T-cell (primary cell): ENCODE measurements at regions of chr5 and their contacts with region 1.

Region 1: GRCh38 chr5:94740286-94740685 is 121.8 kb downstream of the SLF1 start:
- DNase-seq: no peak
- ATAC-seq: no peak
- H3K4me3 ChIP-seq: no peak overlapping the region
- H3K4me3 Mint-ChIP-seq: no peak overlapping the region
- H3K27ac ChIP-seq: no peak overlapping the region
- H3K27ac Mint-ChIP-seq: no peak overlapping the region
- H3K4me1 ChIP-seq: peaks cover 0 to 4% of the 10 kb centered on the region in 2 experiments
- H3K4me1 Mint-ChIP-seq: no peaks in the 10 kb centered on the region
- H3K27me3 ChIP-seq: peaks cover 0 to 11% of the 10 kb centered on the region in 2 experiments
- H3K27me3 Mint-ChIP-seq: peaks cover 0 to 5% of the 10 kb centered on the region in 2 donors

Region 2: GRCh38 chr5:94072116-94072515 is 668.2 kb before region 1 on chr5:
- CTCF ChIA-PET with region 1: no interaction called
- POLR2A ChIA-PET with region 1: no interaction called
- DNase-seq: no peak
- ATAC-seq: no peak
- H3K4me3 ChIP-seq: no peak overlapping the region
- H3K4me3 Mint-ChIP-seq: no peak overlapping the region
- H3K27ac ChIP-seq: no peak overlapping the region
- H3K27ac Mint-ChIP-seq: no peak overlapping the region
- H3K4me1 ChIP-seq: no peaks in the 10 kb centered on the region
- H3K4me1 Mint-ChIP-seq: peaks cover 45 to 52% (median 46%) of the 10 kb centered on the region in 3 donors
- H3K27me3 ChIP-seq: no peaks in the 10 kb centered on the region
- H3K27me3 Mint-ChIP-seq: no peaks in the 10 kb centered on the region

Region 3: DNA sequence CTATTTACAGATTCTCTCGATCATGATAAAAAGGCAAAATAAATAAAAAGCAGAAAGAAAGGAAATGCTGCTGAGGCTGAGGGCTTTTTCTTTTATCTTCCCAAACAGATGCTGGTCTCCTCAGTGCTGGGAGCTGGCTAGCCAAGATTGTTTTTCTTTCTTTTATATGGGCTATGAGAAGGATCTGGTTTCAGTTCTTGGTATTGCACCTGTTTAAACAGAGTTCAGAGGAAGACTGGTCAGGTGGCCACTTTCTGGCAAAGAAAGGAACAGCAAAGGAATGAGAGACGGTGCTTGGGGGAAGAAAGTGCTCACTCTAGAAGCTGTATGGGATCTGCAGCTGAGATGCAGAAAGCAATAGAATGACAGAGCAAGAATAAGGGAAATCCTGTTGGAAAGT is 32.9 kb before region 1 on chr5:
- CTCF ChIA-PET with region 1: no interaction called
- POLR2A ChIA-PET with region 1: no interaction called
- DNase-seq: no peak
- ATAC-seq: no peak
- H3K4me3 ChIP-seq: no peak overlapping the region
- H3K4me3 Mint-ChIP-seq: no peak overlapping the region
- H3K27ac ChIP-seq: no peak overlapping the region
- H3K27ac Mint-ChIP-seq: no peak overlapping the region
- H3K4me1 ChIP-seq: no peaks in the 10 kb centered on the region
- H3K4me1 Mint-ChIP-seq: peaks cover 0 to 5% (median 0%) of the 10 kb centered on the region in 3 donors
- H3K27me3 ChIP-seq: no peaks in the 10 kb centered on the region
- H3K27me3 Mint-ChIP-seq: no peaks in the 10 kb centered on the region

Region 4: GRCh38 chr5:94754824-94755223 is 14.5 kb after region 1 on chr5:
- CTCF ChIA-PET with region 1: interaction called in 1 of 2 experiments, 10 read pairs
- POLR2A ChIA-PET with region 1: interaction called in 1 of 2 experiments, 5 read pairs
- DNase-seq: no peak
- ATAC-seq: no peak
- H3K4me3 ChIP-seq: no peak overlapping the region
- H3K4me3 Mint-ChIP-seq: no peak overlapping the region
- H3K27ac ChIP-seq: no peak overlapping the region
- H3K27ac Mint-ChIP-seq: no peak overlapping the region
- H3K4me1 ChIP-seq: no peaks in the 10 kb centered on the region
- H3K4me1 Mint-ChIP-seq: no peaks in the 10 kb centered on the region
- H3K27me3 ChIP-seq: no peaks in the 10 kb centered on the region
- H3K27me3 Mint-ChIP-seq: peaks cover 0 to 4% of the 10 kb centered on the region in 2 donors

Region 5: DNA sequence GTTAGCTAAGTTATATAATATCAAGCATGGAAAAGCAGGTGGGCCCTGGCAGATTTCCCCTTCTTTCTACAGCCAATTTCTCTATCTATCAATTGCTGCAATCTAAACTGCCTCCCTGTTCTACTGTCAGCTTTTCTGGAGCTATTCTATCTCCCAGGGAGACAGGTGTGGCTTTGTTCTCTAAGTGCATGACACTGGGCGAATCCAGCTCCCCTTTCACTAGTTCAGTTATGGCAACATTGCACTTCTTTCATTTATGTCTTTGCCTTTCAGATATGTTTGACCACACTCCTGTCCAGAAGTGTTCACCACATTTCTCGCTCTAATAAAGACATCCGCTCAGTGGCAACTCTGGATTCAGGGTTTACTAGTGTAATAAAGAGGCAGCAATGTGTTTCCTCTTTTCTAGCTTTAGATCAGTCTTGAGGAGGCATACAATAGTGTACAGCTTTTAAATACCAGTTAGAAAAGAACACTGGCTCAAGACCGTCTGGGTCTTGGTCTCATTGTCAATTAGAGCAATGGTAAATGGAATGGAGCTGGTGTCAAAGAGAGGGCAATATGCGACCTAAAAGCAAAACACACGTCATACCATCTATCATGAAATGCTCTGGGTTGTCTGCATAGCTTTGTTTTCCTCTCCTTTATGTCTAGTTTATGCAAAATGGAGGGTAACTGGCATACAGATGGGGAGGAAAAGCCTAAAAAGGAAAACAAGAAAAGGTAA is 75.2 kb after region 1 on chr5:
- CTCF ChIA-PET with region 1: no interaction called
- POLR2A ChIA-PET with region 1: no interaction called
- DNase-seq: no peak
- ATAC-seq: no peak
- H3K4me3 ChIP-seq: no peak overlapping the region
- H3K4me3 Mint-ChIP-seq: no peak overlapping the region
- H3K27ac ChIP-seq: no peak overlapping the region
- H3K27ac Mint-ChIP-seq: no peak overlapping the region
- H3K4me1 ChIP-seq: no peaks in the 10 kb centered on the region
- H3K4me1 Mint-ChIP-seq: no peaks in the 10 kb centered on the region
- H3K27me3 ChIP-seq: no peaks in the 10 kb centered on the region
- H3K27me3 Mint-ChIP-seq: no peaks in the 10 kb centered on the region

Region 6: DNA sequence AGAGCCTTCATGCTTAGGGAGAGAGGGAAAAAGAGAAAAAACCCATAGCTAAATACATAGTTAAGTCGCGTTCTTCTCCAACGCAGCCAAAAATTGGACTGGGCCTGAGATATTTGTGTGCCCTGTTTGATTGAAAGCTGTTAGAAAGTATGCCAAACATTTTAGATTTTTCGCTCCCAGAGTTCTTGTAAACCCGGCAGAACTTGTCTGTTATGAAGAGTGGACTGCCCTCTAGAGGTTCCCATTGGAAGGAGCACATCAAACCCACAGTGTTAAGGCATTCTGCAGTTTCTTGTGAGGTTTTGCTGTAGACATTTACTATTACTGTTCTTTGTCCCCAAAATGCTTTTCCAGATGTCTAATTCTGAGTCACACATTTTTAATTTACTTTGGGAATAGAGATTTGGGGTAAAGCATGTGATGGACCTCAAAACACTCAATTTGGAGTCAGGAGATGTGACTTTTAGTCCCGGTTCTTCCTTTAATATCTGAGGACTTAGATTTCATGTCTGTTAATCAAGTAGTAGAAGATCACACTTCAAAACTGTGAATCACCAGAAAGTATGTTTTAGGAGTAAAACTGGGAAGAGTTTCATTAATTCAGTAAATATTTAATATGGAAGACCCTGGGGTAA is 1596.2 kb after region 1 on chr5:
- CTCF ChIA-PET with region 1: no interaction called
- POLR2A ChIA-PET with region 1: no interaction called
- DNase-seq: peak in 33 of 35 experiments; percentile 3 to 81 (median 43)
- ATAC-seq: peak; percentile 81 to 92 (median 84)
- H3K4me3 ChIP-seq: no peak overlapping the region
- H3K4me3 Mint-ChIP-seq: no peak overlapping the region
- H3K27ac ChIP-seq: no peak overlapping the region
- H3K27ac Mint-ChIP-seq: no peak overlapping the region
- H3K4me1 ChIP-seq: no peaks in the 10 kb centered on the region
- H3K4me1 Mint-ChIP-seq: no peaks in the 10 kb centered on the region
- H3K27me3 ChIP-seq: peaks cover 0 to 10% of the 10 kb centered on the region in 2 experiments
- H3K27me3 Mint-ChIP-seq: peaks cover 9 to 16% of the 10 kb centered on the region in 2 donors